PC-9 (cell line): ENCODE measurements at regions of chr11 and their contacts with region 1.

Region 1: GRCh38 chr11:1523077-1523476 is 36.5 kb upstream of the MOB2 start:
- DNase-seq: no peak
- H3K4me3 ChIP-seq: no peak overlapping the region
- H3K27ac ChIP-seq: no peak overlapping the region
- H3K4me1 ChIP-seq: no peaks in the 10 kb centered on the region
- H3K27me3 ChIP-seq: no peaks in the 10 kb centered on the region
- CTCF ChIP-seq: no peak

Region 2: DNA sequence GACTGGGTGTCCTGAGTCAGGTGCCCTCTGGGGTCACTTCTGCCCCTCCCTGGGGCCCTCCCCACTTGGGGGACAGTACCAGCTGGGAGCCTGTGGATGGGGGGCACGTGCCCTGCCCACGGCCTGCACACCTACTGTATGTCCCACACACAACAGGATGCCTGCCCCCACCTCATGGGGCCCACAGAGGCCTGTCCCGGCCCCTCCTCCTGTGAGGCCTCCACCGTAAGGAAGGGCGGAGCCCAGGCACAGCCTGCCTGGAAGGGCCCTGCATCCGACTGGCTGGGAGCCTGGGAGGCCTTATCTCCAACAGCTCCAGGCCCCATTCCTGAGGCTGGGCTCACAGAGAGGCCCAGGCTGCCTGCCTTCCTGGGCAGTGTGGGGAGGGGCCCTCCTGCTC is 85.6 kb before region 1 on chr11:
- CTCF ChIA-PET with region 1: no interaction called
- POLR2A ChIA-PET with region 1: no interaction called
- intact Hi-C with region 1: no loop called
- DNase-seq: peak in 1 of 2 experiments; percentile 37
- H3K4me3 ChIP-seq: no peak overlapping the region
- H3K27ac ChIP-seq: no peak overlapping the region
- H3K4me1 ChIP-seq: no peaks in the 10 kb centered on the region
- H3K27me3 ChIP-seq: no peaks in the 10 kb centered on the region
- CTCF ChIP-seq: no peak

Region 3: DNA sequence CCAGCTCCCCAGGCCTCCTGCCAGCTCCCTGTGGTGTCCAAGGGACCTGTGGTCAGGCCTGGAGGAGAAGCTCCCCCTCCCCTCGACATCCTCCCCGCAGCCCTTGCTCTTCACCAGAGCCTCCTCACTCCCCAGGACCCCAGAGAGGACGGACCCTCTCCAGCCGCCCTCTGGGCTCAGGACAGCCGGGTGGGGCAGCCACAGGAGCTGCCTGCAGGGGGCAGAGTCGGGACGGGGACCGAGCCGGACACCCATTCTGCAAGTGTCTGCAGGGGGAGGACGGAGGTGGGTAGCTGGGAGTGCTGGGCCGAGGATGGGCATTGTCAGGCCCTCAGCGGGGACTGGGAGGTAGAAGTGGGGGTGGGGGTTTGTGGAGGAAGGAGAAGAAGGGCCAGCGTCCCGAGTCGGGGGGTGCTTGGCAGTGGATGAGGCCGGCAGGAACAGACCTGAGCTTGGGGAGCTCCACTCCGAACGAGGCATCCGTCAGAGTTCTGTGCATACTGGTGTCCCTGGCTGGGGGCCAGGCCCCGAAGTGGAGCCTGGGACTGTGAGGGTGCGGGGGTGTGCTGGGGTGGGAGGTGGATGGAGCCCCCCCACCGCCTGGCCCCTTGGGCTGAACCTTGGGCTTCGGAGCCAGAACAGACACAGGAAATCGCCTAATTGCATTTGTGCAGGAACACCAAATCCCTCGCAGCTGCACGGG is 353.4 kb after region 1 on chr11:
- CTCF ChIA-PET with region 1: no interaction called
- POLR2A ChIA-PET with region 1: no interaction called
- intact Hi-C with region 1: no loop called
- DNase-seq: no peak
- H3K4me3 ChIP-seq: no peak overlapping the region
- H3K27ac ChIP-seq: no peak overlapping the region
- H3K4me1 ChIP-seq: no peaks in the 10 kb centered on the region
- H3K27me3 ChIP-seq: no peaks in the 10 kb centered on the region
- CTCF ChIP-seq: peak; percentile 52; the same call in 1 of the 2 replicates

Region 4: DNA sequence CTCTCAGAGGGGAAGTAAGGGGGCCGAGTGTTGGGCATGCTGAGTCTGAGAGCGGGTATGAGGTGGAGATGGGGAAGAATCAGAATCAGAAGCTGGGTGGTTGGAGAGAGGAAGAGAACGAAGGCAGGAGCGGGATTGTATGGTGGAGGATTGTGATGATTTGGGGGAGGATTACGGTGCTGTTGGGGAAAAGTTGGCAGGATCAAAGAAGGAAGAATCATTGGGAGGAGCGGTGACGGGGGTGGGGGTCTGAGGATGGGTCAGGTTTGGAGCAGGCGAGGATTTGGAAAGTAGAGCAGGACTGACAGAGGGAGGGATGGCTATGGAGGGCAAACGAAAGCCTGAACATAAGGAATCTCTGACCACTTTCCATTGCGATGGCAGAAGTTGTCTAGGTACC is 1833.8 kb after region 1 on chr11:
- CTCF ChIA-PET with region 1: interaction called, 19 read pairs
- POLR2A ChIA-PET with region 1: no interaction called
- intact Hi-C with region 1: no loop called
- DNase-seq: no peak
- H3K4me3 ChIP-seq: no peak overlapping the region
- H3K27ac ChIP-seq: no peak overlapping the region
- H3K4me1 ChIP-seq: no peaks in the 10 kb centered on the region
- H3K27me3 ChIP-seq: no peaks in the 10 kb centered on the region
- CTCF ChIP-seq: no peak